Activated T-helper 2 cell treated with anti-CD3 and anti-CD28 coated beads, Interferon-gamma antibody, Interleukin-2, Interleukin-4, amounts not matched to agents 10 μg/mL and 5 μg/mL and 100 μg/mL, durations not matched to agents 14 hours and 24 hours and 36 hours (primary cell): ENCODE measurements at regions of chr20 and their contacts with region 1.

Region 1: DNA sequence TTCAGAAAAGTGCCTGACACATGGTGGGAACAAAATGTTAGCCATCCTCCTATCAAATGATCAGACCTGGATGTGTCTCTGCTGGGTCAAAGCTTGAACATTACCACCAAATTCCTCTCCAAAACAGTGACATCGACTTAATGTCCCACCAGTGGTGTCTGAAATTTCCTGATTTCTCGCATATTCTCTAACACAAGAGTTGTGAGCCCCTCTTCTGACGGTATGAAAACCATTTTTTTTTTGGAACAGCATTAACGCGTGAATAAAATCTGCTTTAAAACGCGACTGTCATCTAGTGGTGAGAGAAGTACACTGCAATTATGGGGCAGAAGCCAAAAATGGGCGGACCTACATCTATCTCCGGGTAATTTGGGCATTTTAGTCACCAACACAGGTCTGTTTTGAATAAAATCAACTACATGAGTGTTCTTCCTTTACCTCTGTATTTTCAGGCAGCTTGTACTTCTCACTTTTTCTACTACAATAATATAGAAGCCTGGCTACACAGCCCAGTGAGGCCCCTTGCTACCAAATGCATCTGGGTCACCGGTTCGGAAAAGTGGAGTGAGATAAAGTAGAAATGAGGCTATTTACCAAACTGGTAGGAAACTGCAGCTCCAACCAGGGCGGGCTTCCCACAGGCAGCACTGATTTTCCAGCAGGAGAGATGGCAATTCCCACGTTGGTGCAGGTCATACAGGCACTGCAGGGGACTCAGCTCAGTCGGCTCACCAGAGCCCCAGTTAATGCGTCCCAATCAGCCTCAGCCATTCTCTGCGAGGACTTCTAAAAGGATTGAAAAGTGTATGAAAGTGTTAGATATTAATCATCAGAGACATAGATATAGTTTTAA is 27.4 kb downstream of the MGME1 start:
- DNase-seq: peak; percentile 39
- H3K4me3 Mint-ChIP-seq: no peak overlapping the region
- H3K27ac Mint-ChIP-seq: peak overlapping the region; percentile 44
- H3K4me1 Mint-ChIP-seq: peaks cover 39% of the 10 kb centered on the region
- H3K27me3 Mint-ChIP-seq: no peaks in the 10 kb centered on the region

Region 2: GRCh38 chr20:17558154-17558940 is 437.8 kb before region 1 on chr20:
- intact Hi-C with region 1: loop called (anchors 5 kb)
- DNase-seq: no peak
- H3K4me3 Mint-ChIP-seq: no peak overlapping the region
- H3K27ac Mint-ChIP-seq: peak overlapping the region; percentile 93
- H3K4me1 Mint-ChIP-seq: peaks cover 33% of the 10 kb centered on the region
- H3K27me3 Mint-ChIP-seq: no peaks in the 10 kb centered on the region

Region 3: DNA sequence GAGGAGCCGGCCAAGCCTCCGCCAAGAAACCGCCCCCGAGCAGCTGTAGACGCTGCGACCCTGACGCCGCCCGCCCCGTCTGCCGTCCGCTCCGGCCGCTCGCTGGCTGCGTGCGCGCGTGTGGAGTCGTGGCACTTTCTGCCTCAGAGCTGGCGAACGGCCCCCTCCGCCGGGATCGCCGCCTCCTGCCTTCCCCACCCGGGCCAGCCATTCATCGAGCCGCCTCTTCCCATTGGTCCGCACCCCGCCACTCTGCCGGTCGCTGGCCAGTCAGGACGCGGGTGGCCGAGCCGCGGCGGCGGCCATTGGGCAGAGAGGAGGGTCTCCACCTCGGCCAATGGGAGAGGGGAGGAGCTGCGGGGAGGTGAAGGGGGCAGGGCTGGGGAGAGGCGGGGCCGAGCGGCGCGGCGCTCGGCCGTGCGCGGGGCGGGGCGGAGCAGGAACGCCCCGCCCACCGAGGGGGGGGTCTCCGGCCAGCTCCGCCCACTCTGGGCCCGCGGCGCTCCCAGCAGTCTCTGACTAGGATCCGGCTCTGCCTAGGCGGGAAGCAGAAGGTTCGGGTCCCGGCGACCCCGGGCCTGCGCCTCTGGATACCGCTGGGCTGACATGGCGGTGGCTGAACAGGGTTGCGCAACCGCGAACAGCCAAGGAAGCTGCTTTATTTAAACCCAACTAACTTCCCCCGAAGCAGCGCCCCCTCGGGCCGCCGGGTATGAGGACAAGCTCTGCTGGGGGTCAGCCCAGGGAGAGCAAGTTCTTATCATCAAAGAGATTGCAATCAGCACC is 313.9 kb before region 1 on chr20 and contains the start of gene RRBP1:
- intact Hi-C with region 1: loop called (anchors 2 kb)
- DNase-seq: peak; percentile 96
- H3K4me3 Mint-ChIP-seq: peak within 1 kb of the TSS; percentile 84
- H3K27ac Mint-ChIP-seq: peak within 1 kb of the TSS; percentile 84
- H3K4me1 Mint-ChIP-seq: peaks cover 30% of the 10 kb centered on the region
- H3K27me3 Mint-ChIP-seq: peaks cover 30% of the 10 kb centered on the region
- total RNA-seq, gene RRBP1: 73.1 and 73.6 TPM in 2 replicates

Region 4: DNA sequence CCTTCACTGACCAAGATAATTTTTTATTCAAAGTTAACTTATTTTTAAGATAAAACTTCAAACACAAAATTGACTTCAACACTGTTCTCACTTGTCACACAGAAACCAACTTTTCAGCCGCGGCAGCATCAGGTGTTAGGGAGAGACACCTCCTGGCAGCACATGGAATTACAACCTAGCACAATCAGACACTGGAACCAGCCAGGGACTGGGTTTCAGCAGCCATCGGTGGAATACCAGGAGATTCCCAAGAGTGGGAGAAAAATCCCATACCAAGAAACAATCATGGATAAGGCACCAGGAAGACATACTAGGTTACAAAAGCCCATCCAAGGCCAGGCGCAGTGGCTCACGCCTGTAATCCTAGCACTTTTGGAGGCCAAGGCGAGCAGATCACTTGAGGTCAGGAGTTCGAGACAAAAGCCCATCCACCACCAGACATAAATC is 97.6 kb before region 1 on chr20:
- intact Hi-C with region 1: loop called (anchors 2 kb)
- DNase-seq: peak; percentile 49
- H3K4me3 Mint-ChIP-seq: no peak overlapping the region
- H3K27ac Mint-ChIP-seq: no peak overlapping the region
- H3K4me1 Mint-ChIP-seq: peaks cover 30% of the 10 kb centered on the region
- H3K27me3 Mint-ChIP-seq: peaks cover 21% of the 10 kb centered on the region

Region 5: GRCh38 chr20:17960927-17961586 is 35.1 kb before region 1 on chr20:
- intact Hi-C with region 1: loop called (anchors 1 kb)
- DNase-seq: no peak
- H3K4me3 Mint-ChIP-seq: peak overlapping the region; percentile 57
- H3K27ac Mint-ChIP-seq: peak overlapping the region; percentile 91
- H3K4me1 Mint-ChIP-seq: peaks cover 72% of the 10 kb centered on the region
- H3K27me3 Mint-ChIP-seq: no peaks in the 10 kb centered on the region